Lower leg skin (tissue), 4 donors: ENCODE measurements at regions of chr5 and their contacts with region 1.

Region 1: DNA sequence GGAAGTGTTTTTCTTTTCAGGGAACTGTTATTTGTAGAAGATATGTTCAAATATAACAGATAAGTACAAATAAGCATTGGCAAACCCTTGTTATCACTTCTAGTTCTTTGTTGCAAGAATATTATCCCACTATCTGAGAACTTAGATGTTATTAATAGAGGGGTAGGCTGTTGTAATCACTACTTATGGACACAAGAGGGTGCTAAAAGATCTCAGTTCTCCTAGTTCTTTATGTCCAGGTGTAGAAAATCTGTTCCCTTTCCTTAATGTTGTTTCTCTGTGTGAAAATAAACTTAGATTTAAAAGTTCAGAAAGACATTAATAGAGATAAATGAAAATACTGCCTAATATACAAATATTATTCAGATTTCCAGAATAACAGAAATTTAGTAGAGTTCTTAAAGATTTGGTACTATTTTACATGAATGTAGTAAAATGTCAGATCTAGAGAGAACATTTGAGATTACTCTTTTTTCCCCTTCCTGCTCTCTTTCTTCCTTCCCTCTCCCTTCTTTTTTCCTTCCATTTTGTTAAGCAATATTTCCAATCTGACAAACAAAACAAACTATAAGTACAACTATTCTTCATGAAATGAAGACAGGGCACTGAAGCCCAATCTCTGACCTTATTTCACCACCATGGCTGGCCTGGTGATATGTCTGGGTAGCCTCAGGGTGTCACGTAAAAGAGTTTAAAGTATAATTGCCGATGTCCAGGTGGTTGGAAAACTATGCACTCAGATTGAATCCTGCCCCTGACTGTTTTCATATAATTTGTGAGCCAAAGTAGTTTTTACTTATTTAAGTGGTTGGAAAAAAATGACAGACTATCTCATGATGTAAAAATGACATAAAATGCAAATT is 43.6 kb upstream of the C5orf46 start:
- DNase-seq: no peak
- H3K4me3 ChIP-seq: no peak overlapping the region
- CTCF ChIP-seq: peak in 1 of 3 donors; percentile 51
- POLR2A ChIP-seq: no peak

Region 2: GRCh38 chr5:148113243-148113642 is 163.3 kb after region 1 on chr5:
- intact Hi-C with region 1: loop called (anchors 5 kb)
- DNase-seq: no peak
- H3K4me3 ChIP-seq: no peak overlapping the region
- CTCF ChIP-seq: no peak
- POLR2A ChIP-seq: no peak

Region 3: DNA sequence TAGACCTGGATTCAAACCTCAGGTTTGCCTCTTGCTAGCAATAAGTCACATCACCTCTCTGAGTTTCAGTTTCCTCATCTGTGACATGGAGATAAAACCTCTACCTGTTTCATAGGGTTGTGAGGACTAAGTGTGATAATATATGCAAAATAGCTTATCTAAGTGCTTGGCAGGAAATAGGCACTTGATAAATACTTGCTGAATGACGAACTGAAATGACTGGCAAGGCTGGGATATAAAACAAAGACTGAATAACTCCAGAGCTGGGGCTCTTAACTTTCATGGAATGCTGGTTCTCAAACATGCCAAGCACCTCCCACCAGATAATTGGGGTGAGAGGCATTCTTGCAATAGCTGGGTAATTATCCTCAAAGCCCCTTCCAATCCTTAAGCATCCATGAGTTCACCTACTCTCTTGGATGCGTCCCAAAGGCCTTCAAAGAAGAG is 964.1 kb after region 1 on chr5:
- intact Hi-C with region 1: no loop called
- DNase-seq: no peak
- H3K4me3 ChIP-seq: no peak overlapping the region
- CTCF ChIP-seq: no peak
- POLR2A ChIP-seq: no peak